HCT116 (cell line): ENCODE measurements at regions of chr17 and their contacts with region 1.

Region 1: DNA sequence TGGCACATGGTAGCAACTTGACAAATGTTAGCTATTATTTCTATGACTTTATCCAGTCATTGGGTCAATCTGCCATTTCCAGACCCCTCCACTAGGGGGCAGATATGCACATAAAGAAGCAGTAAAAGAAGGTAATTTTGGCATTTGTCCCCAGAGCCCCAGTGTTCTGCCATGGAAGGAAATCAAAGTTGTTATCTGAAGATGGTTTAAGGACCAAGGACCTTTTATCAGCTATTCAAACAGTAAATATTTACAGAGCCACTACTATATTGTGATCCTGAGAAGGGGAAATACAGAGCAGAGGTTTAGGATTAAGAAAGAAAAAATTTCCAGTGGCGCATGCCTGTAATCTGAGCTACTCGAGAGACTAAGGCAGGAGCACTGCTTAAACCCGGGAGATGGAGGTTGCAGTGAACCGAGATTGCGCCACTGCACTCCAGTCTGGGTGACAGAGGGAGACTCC is 20.0 kb downstream of the TRAF4 start:
- DNase-seq: peak; percentile 53
- ATAC-seq: peak; percentile 78
- H3K4me3 ChIP-seq: no peak overlapping the region
- H3K27ac ChIP-seq: no peak overlapping the region
- H3K4me1 ChIP-seq: peaks cover 0 to 13% of the 10 kb centered on the region in 2 experiments; a peak in 3 of 4 replicates
- H3K27me3 ChIP-seq: no peaks in the 10 kb centered on the region
- CTCF ChIP-seq: peak; percentile 79 to 95 (median 85)
- POLR2A ChIP-seq: no peak
- RAD21 ChIP-seq: peak; percentile 89

Region 2: DNA sequence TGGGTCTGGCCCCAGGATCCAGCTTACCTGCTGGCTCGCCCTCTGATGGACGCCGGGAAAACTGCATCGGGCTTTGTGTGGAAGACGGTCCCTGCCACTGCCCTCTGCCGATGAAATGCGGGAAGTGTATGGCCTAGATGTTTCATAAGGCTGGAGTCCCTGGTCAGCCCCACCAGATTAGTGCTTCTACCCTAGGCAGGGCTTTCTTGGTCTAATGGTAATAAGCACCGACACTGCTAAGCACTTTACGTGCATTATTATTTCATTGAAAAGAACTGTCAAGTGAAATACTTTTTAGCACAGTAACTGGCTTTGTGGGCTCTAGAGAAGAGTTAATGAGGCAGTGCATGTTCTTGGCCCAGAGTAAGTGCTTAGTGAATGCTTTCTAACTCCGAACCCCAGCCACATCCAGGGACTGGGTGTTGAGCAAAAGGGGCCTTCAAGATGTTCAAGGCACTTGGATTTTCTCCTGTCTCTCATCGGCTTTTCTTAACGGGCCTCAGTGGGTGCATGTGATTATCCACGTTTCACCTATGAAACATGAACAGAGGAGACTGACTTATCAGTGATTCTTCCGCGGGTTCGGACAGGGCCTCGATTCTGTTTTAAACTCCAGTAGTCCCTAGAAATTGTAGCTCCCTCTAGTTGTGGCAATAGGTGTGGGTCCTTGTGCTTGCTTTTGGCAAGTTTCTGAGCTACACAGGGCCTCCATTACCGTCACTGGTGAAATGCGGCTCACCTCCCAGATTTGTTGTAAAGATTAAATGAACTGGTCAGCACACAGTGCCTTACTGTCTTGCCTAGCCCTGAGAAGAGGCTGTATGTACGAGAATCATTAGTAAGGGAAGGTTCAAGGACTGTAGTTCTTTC is 13.4 kb before region 1 on chr17:
- CTCF ChIA-PET with region 1: interaction called, 41 read pairs
- POLR2A ChIA-PET with region 1: interaction called, 5 read pairs
- RAD21 ChIA-PET with region 1: interaction called in 1 of 2 experiments, 3 read pairs
- intact Hi-C with region 1: no loop called
- DNase-seq: peak; percentile 85
- ATAC-seq: peak; percentile 75
- H3K4me3 ChIP-seq: no peak overlapping the region
- H3K27ac ChIP-seq: peak overlapping the region; percentile 59; the same call in 1 of the 2 replicates
- H3K4me1 ChIP-seq: peaks cover 22 to 46% of the 10 kb centered on the region in 2 experiments
- H3K27me3 ChIP-seq: no peaks in the 10 kb centered on the region
- CTCF ChIP-seq: peak; percentile 98 to 100 (median 98)
- POLR2A ChIP-seq: no peak
- RAD21 ChIP-seq: peak; percentile 92

Region 3: GRCh38 chr17:28842282-28843012 is 78.6 kb after region 1 on chr17 and contains the start of gene FAM222B:
- CTCF ChIA-PET with region 1: interaction called, 11 read pairs
- POLR2A ChIA-PET with region 1: no interaction called
- RAD21 ChIA-PET with region 1: no interaction called
- intact Hi-C with region 1: no loop called
- DNase-seq: peak; percentile 47
- ATAC-seq: peak; percentile 98
- H3K4me3 ChIP-seq: peak within 1 kb of the TSS; percentile 84 to 96
- H3K27ac ChIP-seq: peak within 1 kb of the TSS; percentile 53
- H3K4me1 ChIP-seq: peaks cover 3 to 18% of the 10 kb centered on the region in 2 experiments; a peak in 3 of 4 replicates
- H3K27me3 ChIP-seq: no peaks in the 10 kb centered on the region
- CTCF ChIP-seq: no peak
- POLR2A ChIP-seq: peak; percentile 17
- RAD21 ChIP-seq: no peak
- total RNA-seq, gene FAM222B: 22.7 TPM

Region 4: GRCh38 chr17:28902819-28903545 is 139.1 kb after region 1 on chr17 and contains the start of gene DHRS13:
- CTCF ChIA-PET with region 1: interaction called, 7 read pairs
- POLR2A ChIA-PET with region 1: no interaction called
- RAD21 ChIA-PET with region 1: no interaction called
- intact Hi-C with region 1: loop called (anchors 5 kb)
- DNase-seq: peak; percentile 91
- ATAC-seq: peak; percentile 95
- H3K4me3 ChIP-seq: peak within 1 kb of the TSS; percentile 70 to 84
- H3K27ac ChIP-seq: peak within 1 kb of the TSS; percentile 69
- H3K4me1 ChIP-seq: peaks cover 11 to 22% of the 10 kb centered on the region in 2 experiments; a peak in 3 of 4 replicates
- H3K27me3 ChIP-seq: no peaks in the 10 kb centered on the region
- CTCF ChIP-seq: peak; percentile 96 to 99 (median 97)
- POLR2A ChIP-seq: peak; percentile 58
- RAD21 ChIP-seq: peak; percentile 68
- total RNA-seq, gene DHRS13: 13.5 TPM

Region 5: DNA sequence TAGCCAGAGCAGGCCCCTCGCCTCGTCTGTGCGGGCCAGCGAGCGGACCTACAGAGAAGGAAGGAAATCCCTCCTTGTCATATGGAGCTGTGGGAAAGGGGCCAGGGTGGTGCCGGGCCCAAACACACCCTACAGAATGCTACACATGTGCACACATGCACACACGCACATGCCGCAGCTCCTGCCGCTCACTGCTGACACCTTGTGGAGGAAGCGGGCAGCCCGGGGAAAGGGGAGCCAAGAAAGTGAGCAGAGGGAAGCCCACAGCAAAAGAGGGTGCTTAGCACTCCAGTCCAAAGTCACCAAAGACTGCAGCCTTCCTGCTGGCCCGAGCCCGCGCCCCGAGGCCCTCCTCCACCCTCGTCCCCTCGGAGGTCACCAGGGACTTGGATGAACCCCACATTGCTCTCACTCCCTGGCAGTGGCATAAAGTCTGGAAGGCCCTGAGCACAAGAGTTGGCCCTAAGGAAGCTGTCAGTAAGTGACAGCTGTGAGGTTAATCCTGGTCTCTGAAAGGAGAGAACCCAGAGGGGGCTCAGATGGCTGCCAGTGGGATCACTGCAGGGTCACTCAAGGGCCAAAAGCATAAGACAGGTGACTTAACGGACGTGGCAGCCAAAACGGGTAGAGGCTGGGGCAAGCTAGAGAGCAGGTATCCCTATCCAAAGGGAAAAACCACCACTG is 348.1 kb after region 1 on chr17:
- CTCF ChIA-PET with region 1: interaction called, 4 read pairs
- POLR2A ChIA-PET with region 1: no interaction called
- RAD21 ChIA-PET with region 1: no interaction called
- intact Hi-C with region 1: loop called (anchors 10 kb)
- DNase-seq: no peak
- ATAC-seq: peak; percentile 77
- H3K4me3 ChIP-seq: no peak overlapping the region
- H3K27ac ChIP-seq: 0 out of 2 replicates have a peak overlapping the region, but pooled peaks have one; percentile 12
- H3K4me1 ChIP-seq: peaks cover 15 to 28% of the 10 kb centered on the region in 2 experiments
- H3K27me3 ChIP-seq: no peaks in the 10 kb centered on the region
- CTCF ChIP-seq: peak; percentile 79 to 97 (median 95)
- POLR2A ChIP-seq: no peak
- RAD21 ChIP-seq: peak; percentile 75